ENCODE measurements at regions of chr17 and their contacts with region 1.

Region 1: GRCh38 chr17:39845052-39845846 is 18.9 kb downstream of the IKZF3 start:
- DNase-seq: no peak
- ATAC-seq: peak; percentile 17
- H3K4me3 ChIP-seq: no peak overlapping the region
- H3K4me3 Mint-ChIP-seq: peak overlapping the region; percentile 31
- H3K27ac ChIP-seq: peak overlapping the region in 1 of 2 donors; percentile 10
- H3K27ac Mint-ChIP-seq: peak overlapping the region; percentile 86
- H3K4me1 ChIP-seq: peaks cover 26% of the 10 kb centered on the region
- H3K4me1 Mint-ChIP-seq: peaks cover 79% of the 10 kb centered on the region
- H3K27me3 ChIP-seq: no peaks in the 10 kb centered on the region
- H3K27me3 Mint-ChIP-seq: no peaks in the 10 kb centered on the region
- CTCF ChIP-seq: no peak

Region 2: DNA sequence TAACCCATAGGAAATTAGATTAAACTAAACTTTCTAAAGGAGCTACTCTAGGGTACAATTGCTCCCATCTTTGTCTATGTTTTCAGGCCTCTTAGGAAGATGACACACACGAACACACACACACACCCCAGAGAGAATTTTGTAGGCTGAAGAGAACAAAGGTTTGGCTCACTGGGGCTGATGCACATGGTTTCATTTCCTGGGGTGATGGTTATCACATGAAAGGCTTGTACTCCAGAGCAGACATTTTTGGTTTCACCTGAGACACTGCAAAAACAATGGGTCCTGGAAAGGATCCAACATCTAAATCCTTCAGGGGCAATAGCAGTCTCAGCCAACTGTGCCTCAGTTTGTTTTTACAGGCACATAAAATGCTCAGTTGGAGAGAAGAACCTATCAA is 44.7 kb before region 1 on chr17:
- CTCF ChIA-PET with region 1: no interaction called
- POLR2A ChIA-PET with region 1: no interaction called
- intact Hi-C with region 1: loop called in 1 of 2 experiments (anchors 5 kb)
- DNase-seq: peak in 13 of 14 experiments; percentile 37 to 88 (median 51)
- ATAC-seq: peak; percentile 98
- H3K4me3 ChIP-seq: no peak overlapping the region
- H3K4me3 Mint-ChIP-seq: peak overlapping the region; percentile 39
- H3K27ac ChIP-seq: peak overlapping the region; percentile 24 to 58
- H3K27ac Mint-ChIP-seq: peak overlapping the region; percentile 92
- H3K4me1 ChIP-seq: peaks cover 33% of the 10 kb centered on the region
- H3K4me1 Mint-ChIP-seq: peaks cover 65% of the 10 kb centered on the region
- H3K27me3 ChIP-seq: no peaks in the 10 kb centered on the region
- H3K27me3 Mint-ChIP-seq: no peaks in the 10 kb centered on the region
- CTCF ChIP-seq: no peak

Region 3: DNA sequence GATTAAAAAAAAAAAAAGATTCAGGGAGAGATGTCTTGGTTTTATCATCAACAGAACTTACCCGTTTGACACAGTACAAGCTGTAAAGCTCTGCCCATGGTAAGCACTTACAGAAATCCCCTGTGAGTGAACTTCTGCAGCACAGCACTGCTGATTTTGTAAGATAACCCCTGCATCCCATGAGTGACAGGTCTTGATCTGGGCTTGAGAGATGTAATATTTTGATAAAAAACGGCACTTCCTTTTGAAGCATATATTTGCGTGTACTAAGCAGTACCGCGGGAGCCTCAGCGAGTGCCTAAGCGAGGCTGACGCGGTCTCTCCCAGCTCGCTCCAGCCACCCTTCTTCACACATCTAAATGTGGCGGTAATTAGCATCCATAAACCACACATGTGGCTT is 31.6 kb before region 1 on chr17:
- CTCF ChIA-PET with region 1: interaction called, 3 read pairs
- POLR2A ChIA-PET with region 1: interaction called, 15 read pairs
- intact Hi-C with region 1: loop called in 1 of 2 experiments (anchors 5 kb)
- DNase-seq: peak; percentile 39 to 94 (median 54)
- ATAC-seq: peak; percentile 90
- H3K4me3 ChIP-seq: peak overlapping the region; percentile 15
- H3K4me3 Mint-ChIP-seq: peak overlapping the region; percentile 76
- H3K27ac ChIP-seq: peak overlapping the region; percentile 68 to 79
- H3K27ac Mint-ChIP-seq: peak overlapping the region; percentile 90
- H3K4me1 ChIP-seq: peaks cover 35% of the 10 kb centered on the region
- H3K4me1 Mint-ChIP-seq: peaks cover 84% of the 10 kb centered on the region
- H3K27me3 ChIP-seq: no peaks in the 10 kb centered on the region
- H3K27me3 Mint-ChIP-seq: no peaks in the 10 kb centered on the region
- CTCF ChIP-seq: no peak

Region 4: GRCh38 chr17:39822051-39822451 is 23.2 kb before region 1 on chr17:
- CTCF ChIA-PET with region 1: no interaction called
- POLR2A ChIA-PET with region 1: interaction called, 15 read pairs
- intact Hi-C with region 1: no loop called
- DNase-seq: peak in 2 of 14 experiments; percentile 33 to 55
- ATAC-seq: no peak
- H3K4me3 ChIP-seq: no peak overlapping the region
- H3K4me3 Mint-ChIP-seq: no peak overlapping the region
- H3K27ac ChIP-seq: peak overlapping the region in 1 of 2 donors; percentile 26
- H3K27ac Mint-ChIP-seq: peak overlapping the region; percentile 94
- H3K4me1 ChIP-seq: peaks cover 35% of the 10 kb centered on the region
- H3K4me1 Mint-ChIP-seq: peaks cover 58% of the 10 kb centered on the region
- H3K27me3 ChIP-seq: no peaks in the 10 kb centered on the region
- H3K27me3 Mint-ChIP-seq: no peaks in the 10 kb centered on the region
- CTCF ChIP-seq: no peak

Measured in CD4-positive, alpha-beta T cell (primary cell).